Posterior vena cava (tissue), 2 donors: ENCODE measurements at regions of chr1 and their contacts with region 1.

Region 1: DNA sequence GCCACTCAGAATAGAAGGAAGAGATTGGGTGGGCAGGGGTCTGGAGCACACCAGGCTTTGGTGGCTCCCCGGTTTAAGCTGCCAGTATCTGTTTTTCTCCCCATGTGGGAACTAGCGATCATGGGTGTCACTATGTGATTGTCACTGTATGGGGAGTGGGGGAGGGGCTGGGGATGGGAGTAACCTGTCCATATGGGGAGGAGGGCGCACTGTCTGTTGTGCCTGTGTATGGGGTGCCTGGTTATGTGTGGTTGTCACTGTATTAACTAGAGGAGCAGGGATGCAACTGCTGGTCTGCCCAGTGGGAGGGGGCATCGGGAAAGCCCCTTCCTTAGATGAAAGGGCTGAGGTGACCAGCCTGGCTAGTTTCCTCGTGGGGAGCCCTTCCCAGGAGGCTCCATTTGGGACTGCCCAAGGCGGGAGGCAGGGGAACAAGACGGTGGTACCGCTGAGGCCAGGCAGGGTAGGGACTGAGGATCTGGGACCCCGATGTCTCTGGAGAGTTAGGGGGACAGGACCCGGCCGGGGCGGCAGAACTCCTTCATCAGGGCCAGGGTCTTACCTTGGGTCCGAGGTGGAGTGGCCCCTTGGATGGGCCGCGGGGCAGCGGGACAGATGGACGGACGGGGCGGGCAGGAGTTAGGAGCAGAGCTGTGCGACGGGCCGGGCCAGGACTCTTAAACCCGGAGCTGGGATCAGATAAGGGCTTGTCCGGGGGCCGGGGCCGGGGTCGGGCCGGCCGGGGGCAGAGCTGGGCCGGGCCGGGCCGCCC is at the start of gene KCNJ10:
- DNase-seq: no peak
- total RNA-seq, gene KCNJ10: 0.19 TPM in 1 of 2 donors, not detected in the other

Region 2: DNA sequence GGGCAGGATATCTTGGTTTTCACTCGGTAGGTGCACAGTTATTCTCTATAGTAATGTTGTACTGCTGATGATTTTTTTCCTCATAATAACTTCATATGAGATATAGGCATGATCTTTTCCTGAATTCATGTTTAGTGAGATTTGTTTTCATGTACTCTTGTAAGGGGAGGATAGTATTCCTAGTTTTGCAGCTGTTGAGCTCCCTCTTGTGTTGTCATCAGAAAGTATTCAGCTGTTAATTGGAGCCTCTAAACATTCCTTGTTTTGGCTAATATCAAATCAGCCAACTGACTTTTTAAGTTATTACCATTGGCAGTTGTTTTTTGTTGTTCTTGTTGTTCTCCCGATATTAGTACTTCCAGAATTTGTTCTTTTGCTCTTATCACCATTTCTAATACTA is 1573.3 kb before region 1 on chr1:
- intact Hi-C with region 1: loop called in 1 of 2 experiments (anchors 5 kb)
- DNase-seq: no peak

Region 3: GRCh38 chr1:160018900-160019299 is 50.7 kb before region 1 on chr1:
- intact Hi-C with region 1: no loop called
- DNase-seq: no peak